Posterior vena cava (tissue), 2 donors: ENCODE measurements at regions of chr6 and their contacts with region 1.

Region 1: GRCh38 chr6:13336553-13336952 is 8.2 kb upstream of the TBC1D7 start:
- DNase-seq: peak; percentile 93

Region 2: DNA sequence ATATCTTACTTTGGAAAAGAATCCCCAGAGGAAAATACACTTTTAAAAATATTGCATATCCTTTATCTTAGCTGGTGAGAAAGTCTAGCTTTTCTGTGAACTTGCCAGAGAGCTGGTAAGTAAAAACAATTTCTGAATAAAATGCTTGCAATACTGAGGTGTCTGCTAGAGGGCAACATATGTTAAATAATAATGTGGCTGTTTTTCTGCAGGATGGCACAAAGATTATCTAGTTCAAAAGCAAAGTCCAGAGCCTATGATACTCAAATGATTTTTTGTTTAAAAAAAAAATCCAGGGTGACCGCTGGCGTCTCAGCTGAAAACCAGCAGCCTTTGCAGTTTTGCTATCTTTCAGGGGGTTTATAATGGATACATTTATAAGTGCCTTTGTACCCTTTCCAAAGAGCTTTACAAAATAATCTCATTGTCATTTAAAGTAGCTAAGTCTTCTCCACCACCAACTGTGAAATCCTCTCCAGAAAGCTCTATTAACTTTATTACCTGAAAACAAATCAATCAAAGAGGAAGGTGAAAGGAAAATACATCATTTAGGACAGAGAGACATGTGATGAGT is 425.1 kb before region 1 on chr6:
- intact Hi-C with region 1: loop called (anchors 5 to 10 kb)
- DNase-seq: no peak

Region 3: GRCh38 chr6:13038315-13038714 is 298.2 kb before region 1 on chr6:
- intact Hi-C with region 1: loop called in 1 of 2 experiments (anchors 5 kb)
- DNase-seq: no peak

Region 4: DNA sequence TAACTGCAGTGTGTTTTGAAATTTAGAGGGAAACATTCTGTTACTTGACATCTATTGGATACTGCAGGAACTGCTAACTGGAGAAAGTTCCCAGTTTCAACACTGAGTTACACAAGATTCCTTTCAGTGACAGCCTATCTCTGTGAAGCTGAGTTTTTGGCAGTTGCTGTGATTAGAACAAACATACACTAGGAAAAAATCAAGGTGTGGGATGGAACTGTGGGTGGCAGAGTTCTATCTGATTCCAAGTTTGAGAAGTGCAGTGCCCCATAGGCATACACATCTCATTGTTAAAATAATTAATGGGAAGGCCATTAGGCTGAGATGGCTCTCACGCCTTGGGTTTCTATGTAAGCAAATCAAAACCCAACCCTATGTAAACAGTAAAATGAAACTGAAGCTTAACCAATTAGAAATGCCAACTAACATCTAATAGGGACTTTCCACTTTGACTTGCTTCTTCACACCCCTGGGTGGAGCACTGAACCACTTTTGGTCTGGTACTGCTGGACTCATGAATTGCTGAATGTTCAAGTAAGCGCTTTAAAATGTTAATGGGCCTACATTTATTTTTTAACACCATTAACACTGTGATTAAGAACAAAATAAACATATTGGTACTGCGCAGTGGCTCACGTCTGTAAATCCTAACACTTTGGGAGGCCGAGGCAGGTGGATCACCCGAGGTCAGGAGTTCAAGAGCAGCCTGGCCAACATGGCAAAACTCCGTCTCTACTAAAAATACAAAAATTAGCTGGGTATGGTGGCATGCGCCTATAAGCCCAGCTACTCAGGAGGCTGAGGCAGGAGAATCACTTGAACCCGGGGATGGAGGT is 47.0 kb after region 1 on chr6:
- intact Hi-C with region 1: no loop called
- DNase-seq: no peak

Region 5: GRCh38 chr6:13526727-13527670 is 190.4 kb after region 1 on chr6:
- intact Hi-C with region 1: loop called in 1 of 2 experiments (anchors 5 kb)
- DNase-seq: no peak

Region 6: DNA sequence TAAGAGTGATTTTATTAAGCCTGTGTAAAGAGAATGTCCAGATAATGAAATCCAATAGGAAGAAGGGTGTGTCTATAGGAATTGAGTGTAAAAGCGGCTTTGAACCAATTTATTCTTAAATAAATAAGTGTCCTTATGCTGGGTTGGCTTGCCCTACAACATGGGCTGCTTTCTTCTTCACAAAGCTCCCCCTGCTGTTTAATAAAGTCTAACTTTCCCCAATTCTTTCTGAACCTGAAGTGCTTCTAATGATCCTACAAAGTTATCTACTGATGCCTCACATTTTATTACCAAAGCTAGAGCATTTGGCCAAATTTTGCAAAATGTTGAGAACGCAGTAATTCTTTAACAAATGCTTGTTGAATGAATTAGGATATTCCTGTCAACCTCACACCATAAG is 201.5 kb after region 1 on chr6:
- intact Hi-C with region 1: loop called (anchors 5 kb)
- DNase-seq: no peak